ENCODE measurements at regions of chr12 and their contacts with region 1.

Region 1: GRCh38 chr12:39272871-39273770 is 169.8 kb downstream of the KIF21A start:
- DNase-seq: peak in 1 of 2 experiments; percentile 69
- H3K4me3 ChIP-seq: no peak overlapping the region
- H3K4me3 Mint-ChIP-seq: no peak overlapping the region
- H3K27ac Mint-ChIP-seq: no peak overlapping the region
- H3K4me1 ChIP-seq: no peaks in the 10 kb centered on the region; the same call in 1 of the 2 replicates
- H3K4me1 Mint-ChIP-seq: peaks cover 9% of the 10 kb centered on the region
- H3K27me3 ChIP-seq: no peaks in the 10 kb centered on the region
- H3K27me3 Mint-ChIP-seq: no peaks in the 10 kb centered on the region
- CTCF ChIP-seq: peak; percentile 70 to 78

Region 2: GRCh38 chr12:39122562-39123204 is 150.4 kb before region 1 on chr12:
- CTCF ChIA-PET with region 1: interaction called, 8 read pairs
- POLR2A ChIA-PET with region 1: no interaction called
- intact Hi-C with region 1: loop called (anchors 1 kb)
- DNase-seq: peak; percentile 56 to 77
- H3K4me3 ChIP-seq: no peak overlapping the region
- H3K4me3 Mint-ChIP-seq: no peak overlapping the region
- H3K27ac Mint-ChIP-seq: peak overlapping the region; percentile 53
- H3K4me1 ChIP-seq: peaks cover 46% of the 10 kb centered on the region
- H3K4me1 Mint-ChIP-seq: peaks cover 29% of the 10 kb centered on the region
- H3K27me3 ChIP-seq: no peaks in the 10 kb centered on the region
- H3K27me3 Mint-ChIP-seq: no peaks in the 10 kb centered on the region
- CTCF ChIP-seq: no peak

Region 3: DNA sequence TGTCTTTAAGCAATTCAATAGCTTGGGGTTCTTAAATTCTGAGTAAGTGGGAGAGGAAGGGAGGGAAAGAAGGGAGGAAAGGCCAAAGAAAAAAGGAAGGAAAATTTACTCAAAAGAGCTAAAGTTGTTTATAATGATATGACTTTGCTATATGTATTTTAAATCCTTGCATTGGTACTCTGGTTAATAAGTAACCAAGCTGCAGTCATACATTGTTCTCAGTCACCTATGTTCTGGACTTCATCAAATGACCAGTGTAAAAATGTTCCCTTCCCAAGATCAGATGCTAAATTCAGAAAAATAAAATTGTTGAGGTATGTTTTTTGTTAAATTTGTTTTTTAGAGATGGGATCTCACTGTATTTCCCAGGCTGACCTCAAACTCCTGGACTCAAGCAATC is 107.8 kb before region 1 on chr12:
- CTCF ChIA-PET with region 1: no interaction called
- POLR2A ChIA-PET with region 1: no interaction called
- intact Hi-C with region 1: loop called (anchors 5 kb)
- DNase-seq: no peak
- H3K4me3 ChIP-seq: no peak overlapping the region
- H3K4me3 Mint-ChIP-seq: no peak overlapping the region
- H3K27ac Mint-ChIP-seq: no peak overlapping the region
- H3K4me1 ChIP-seq: no peaks in the 10 kb centered on the region
- H3K4me1 Mint-ChIP-seq: no peaks in the 10 kb centered on the region
- H3K27me3 ChIP-seq: no peaks in the 10 kb centered on the region
- H3K27me3 Mint-ChIP-seq: no peaks in the 10 kb centered on the region
- CTCF ChIP-seq: no peak

Region 4: DNA sequence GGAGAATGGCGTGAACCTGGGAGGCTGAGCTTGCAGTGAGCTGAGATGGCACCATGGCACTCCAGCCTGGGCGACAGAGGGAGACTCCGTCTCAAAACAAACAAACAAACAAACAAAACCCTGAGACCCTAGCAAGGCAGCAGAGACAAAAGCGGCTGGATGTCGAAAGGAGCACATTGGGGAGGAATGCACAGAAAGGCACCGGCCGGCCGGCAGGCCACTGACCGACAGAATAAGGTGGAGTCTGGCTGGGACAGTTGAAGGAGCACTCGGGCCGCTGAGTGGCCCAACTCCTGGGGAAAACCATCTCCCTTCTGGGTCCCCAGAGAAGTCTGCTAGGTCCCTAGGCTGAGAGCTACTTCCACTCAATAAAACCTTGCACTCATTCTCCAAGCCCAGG is 86.4 kb before region 1 on chr12:
- CTCF ChIA-PET with region 1: no interaction called
- POLR2A ChIA-PET with region 1: no interaction called
- intact Hi-C with region 1: no loop called
- DNase-seq: no peak
- H3K4me3 ChIP-seq: no peak overlapping the region
- H3K4me3 Mint-ChIP-seq: no peak overlapping the region
- H3K27ac Mint-ChIP-seq: no peak overlapping the region
- H3K4me1 ChIP-seq: no peaks in the 10 kb centered on the region
- H3K4me1 Mint-ChIP-seq: no peaks in the 10 kb centered on the region
- H3K27me3 ChIP-seq: no peaks in the 10 kb centered on the region
- H3K27me3 Mint-ChIP-seq: peaks cover 3% of the 10 kb centered on the region
- CTCF ChIP-seq: no peak

Region 5: GRCh38 chr12:39354955-39355354 is 81.8 kb after region 1 on chr12:
- CTCF ChIA-PET with region 1: no interaction called
- POLR2A ChIA-PET with region 1: no interaction called
- intact Hi-C with region 1: no loop called
- DNase-seq: no peak
- H3K4me3 ChIP-seq: no peak overlapping the region
- H3K4me3 Mint-ChIP-seq: no peak overlapping the region
- H3K27ac Mint-ChIP-seq: no peak overlapping the region
- H3K4me1 ChIP-seq: no peaks in the 10 kb centered on the region
- H3K4me1 Mint-ChIP-seq: no peaks in the 10 kb centered on the region
- H3K27me3 ChIP-seq: no peaks in the 10 kb centered on the region
- H3K27me3 Mint-ChIP-seq: no peaks in the 10 kb centered on the region
- CTCF ChIP-seq: no peak

Measured in Caco-2 (cell line).